ENCODE measurements at regions of chr9 and their contacts with region 1.

Region 1: DNA sequence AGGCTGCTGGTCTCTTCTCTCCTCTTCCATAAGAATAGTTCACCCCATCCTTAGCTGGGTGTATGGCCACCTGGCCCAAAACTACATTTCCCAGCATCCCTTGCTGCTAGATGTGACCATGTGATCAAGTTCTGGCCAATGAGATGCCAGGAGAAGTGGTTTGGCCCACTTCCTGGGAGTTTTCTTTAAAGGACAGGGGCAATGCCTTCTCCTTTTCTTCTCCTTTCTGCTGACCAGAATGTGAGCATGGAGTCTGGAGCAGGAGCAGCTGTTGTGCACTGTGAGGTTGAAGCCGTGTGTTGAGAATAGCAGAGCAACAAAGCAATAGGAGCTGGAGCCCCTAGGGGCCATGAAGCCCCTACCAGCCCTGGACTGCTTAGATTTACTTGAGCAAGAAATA is 36.8 kb downstream of the C9orf50 start:
- DNase-seq: peak in 1 of 2 donors; percentile 72
- H3K4me3 ChIP-seq: no peak overlapping the region
- CTCF ChIP-seq: no peak
- POLR2A ChIP-seq: no peak

Region 2: DNA sequence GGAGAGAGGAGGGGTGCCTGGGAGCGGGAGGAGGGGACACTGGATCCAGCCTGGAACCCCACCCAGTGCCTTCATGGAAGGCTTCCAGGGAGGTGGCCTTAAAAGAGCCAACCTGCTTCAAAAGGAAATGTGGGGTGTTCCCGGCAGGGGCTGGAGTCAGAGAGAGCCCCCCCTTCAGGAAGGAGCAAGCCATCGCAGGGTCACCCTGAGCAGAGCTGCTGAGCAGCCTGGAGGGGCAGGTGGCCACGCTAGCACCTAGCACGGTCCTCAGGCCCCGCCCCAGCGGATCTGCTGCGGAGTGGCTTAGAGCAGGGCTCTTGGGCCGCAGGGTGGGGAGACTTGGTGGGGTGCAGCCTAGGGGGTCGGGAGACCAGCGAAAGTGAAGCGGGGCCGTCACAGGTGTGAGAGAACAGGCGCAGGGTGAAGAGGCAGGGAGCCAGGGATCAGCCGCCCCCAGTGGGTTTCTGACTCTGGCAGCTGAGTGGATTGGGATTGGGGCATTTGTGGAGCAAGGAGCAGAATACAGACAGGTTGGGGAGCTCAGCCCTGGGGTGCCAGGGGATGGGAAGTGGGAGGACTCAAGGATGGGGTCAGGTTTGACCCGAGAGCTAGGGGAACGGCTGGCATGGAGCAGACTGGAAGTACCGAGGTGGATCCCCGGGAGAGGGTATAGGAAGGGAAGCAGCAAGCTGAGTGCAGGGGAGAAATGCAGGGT is 1433.4 kb before region 1 on chr9:
- intact Hi-C with region 1: no loop called
- DNase-seq: no peak
- H3K4me3 ChIP-seq: no peak overlapping the region
- CTCF ChIP-seq: no peak
- POLR2A ChIP-seq: no peak

Region 3: DNA sequence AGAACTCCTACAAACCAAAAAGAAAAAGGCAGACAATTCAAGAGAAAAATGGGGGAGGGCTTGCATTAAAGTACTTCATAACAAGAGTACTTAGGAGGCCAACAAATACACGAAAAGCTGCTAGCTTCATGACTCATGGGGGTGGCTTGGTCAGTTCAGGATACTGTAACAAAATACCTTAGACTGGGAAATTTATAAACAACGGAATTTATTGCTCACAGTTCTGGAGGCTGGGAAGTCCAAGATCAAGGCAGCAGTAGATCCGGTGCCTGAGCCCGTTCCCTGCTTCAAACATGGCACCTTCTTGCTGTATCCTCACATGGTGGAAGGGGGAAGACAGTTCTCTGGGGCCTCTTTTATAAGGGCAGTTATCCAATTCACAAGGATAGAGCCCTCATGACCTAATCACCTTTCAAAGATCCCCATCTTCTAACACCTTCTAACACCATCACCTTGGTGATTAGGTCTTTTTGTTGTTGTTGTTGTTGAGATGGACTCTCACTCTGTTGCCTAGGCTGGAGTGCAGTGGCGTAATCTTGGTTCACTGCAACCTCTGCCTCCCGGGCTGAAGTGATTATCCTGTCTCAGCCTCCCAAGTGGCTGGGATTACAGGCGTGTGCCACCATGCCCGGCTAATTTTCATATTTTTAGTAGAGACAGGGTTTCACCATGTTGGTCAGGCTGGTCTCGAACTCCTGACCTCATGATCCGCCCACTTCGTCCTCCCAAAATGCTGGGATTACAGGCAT is 74.4 kb before region 1 on chr9:
- intact Hi-C with region 1: loop called (anchors 10 kb)
- DNase-seq: no peak
- H3K4me3 ChIP-seq: no peak overlapping the region
- CTCF ChIP-seq: no peak
- POLR2A ChIP-seq: no peak